Naive thymus-derived CD8-positive, alpha-beta T cell (primary cell): ENCODE measurements at regions of chr3 and their contacts with region 1.

Region 1: DNA sequence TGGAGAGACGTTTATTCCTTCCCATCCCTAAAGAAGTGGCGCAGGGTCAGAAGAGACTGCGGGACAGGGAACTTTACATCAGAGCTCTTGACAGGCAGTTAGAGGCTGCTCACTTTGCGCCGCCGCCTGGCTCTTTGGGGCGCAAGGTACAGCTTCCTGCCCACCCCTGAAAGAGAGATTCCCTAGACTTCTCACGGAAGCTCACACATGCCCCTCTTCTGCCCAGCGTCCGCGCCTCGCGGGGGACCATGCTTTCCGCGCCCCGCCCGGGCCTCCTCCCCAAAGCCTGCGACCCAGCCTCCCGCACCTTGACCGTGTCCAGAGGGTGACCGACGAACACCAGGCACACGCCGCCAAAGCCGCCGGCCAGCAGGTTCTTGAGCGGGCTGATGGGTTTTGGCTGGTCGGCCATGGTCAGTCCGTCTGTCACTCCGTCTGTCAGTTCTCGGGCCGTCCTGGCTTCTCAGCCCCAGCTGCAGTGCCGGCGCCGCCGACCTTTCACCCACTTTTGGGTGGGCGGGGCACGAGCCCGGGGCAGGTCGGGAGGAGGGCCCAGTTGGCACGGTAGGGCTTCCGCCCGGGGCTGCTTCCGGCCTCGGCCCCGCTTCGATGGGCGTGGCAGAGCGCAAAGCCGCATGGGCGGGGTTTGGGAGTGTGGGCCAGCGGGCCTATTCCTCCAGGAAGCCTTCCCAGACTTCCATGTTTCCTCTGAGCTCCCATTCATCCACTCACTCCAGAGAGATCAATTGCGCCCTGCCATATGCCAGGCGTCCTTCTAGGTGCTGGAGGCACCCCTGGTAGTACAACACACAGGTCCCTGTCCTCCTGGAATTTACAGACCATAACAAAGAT is at the start of gene SLC25A20:
- DNase-seq: peak; percentile 79 to 92 (median 86)
- ATAC-seq: peak; percentile 94
- H3K4me3 Mint-ChIP-seq: peak within 1 kb of the TSS; percentile 92 to 97 (median 95)
- H3K27ac Mint-ChIP-seq: peak within 1 kb of the TSS; percentile 83 to 97 (median 95)
- H3K4me1 Mint-ChIP-seq: peaks cover 16 to 59% (median 47%) of the 10 kb centered on the region in 4 donors
- H3K27me3 Mint-ChIP-seq: no peaks in the 10 kb centered on the region
- polyA plus RNA-seq, gene SLC25A20: 13.7 to 44.6 (median 19.4) TPM

Region 2: GRCh38 chr3:48716982-48717746 is 181.4 kb before region 1 on chr3 and contains the start of gene IP6K2:
- POLR2A ChIA-PET with region 1: interaction called, 11 read pairs
- DNase-seq: peak; percentile 94 to 99 (median 98)
- ATAC-seq: peak; percentile 99
- H3K4me3 Mint-ChIP-seq: peak within 1 kb of the TSS; percentile 88 to 99 (median 96)
- H3K27ac Mint-ChIP-seq: peak within 1 kb of the TSS; percentile 87 to 98 (median 97)
- H3K4me1 Mint-ChIP-seq: peaks cover 15 to 47% (median 43%) of the 10 kb centered on the region in 4 donors
- H3K27me3 Mint-ChIP-seq: peaks cover 0 to 2% (median 0%) of the 10 kb centered on the region in 5 donors
- polyA plus RNA-seq, gene IP6K2: 46.4 to 58.8 (median 51.4) TPM

Region 3: GRCh38 chr3:48811524-48811923 is 87.1 kb before region 1 on chr3:
- POLR2A ChIA-PET with region 1: interaction called, 10 read pairs
- DNase-seq: no peak
- ATAC-seq: no peak
- H3K4me3 Mint-ChIP-seq: peak overlapping the region in 7 of 10 donors; percentile 27 to 61 (median 40)
- H3K27ac Mint-ChIP-seq: peak overlapping the region; percentile 73 to 95 (median 92)
- H3K4me1 Mint-ChIP-seq: peaks cover 9 to 43% (median 30%) of the 10 kb centered on the region in 4 donors
- H3K27me3 Mint-ChIP-seq: no peaks in the 10 kb centered on the region

Region 4: DNA sequence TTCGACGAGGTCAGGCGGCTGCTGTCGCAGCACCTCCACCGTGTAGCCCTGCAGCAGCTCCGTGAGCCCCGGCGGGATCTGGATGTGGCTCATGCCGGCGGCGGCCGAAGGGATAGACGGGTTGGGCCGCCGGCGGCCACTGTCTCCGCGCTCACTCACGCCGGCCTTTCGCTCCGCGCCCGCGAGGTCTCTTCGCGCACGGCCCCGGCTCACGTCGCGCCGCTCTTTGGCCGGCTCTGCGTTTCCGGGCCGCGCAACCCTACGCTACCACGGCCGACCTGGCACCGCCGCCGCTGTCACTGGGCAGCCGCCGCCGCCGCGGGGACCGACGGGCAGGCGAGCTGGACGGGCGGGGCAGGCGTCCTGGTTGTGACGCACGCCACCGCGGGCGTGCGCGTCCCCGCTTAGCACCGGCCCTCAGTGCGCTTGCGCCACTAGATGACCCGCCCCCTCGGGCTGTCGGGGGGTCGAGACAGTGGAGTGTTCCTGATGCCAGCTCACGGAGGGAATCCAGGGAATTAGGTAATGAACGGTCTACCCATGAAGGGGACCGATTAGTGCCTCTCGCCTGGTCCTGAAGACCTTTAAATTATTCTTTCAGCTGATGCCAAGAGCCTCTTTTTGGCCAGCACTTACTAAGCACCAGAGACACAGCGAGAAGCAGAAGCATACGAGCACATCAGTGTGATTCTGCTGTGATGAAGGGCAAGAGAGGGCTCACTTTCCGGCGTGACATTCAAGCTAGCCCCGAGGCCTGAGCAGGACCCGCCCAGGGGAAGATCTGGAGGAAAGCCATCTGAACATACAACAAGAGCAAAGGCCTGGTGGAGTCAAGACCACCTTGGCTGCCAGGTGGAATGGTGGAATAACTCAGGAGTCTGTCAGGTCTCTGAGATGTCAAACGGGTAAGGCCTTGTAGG is 50.8 kb before region 1 on chr3 and contains the start of gene PRKAR2A:
- POLR2A ChIA-PET with region 1: interaction called, 15 read pairs
- DNase-seq: peak; percentile 65 to 88 (median 78)
- ATAC-seq: peak; percentile 73 to 83
- H3K4me3 Mint-ChIP-seq: peak within 1 kb of the TSS; percentile 81 to 94 (median 91)
- H3K27ac Mint-ChIP-seq: peak within 1 kb of the TSS; percentile 93 to 99 (median 97)
- H3K4me1 Mint-ChIP-seq: peaks cover 10 to 34% (median 25%) of the 10 kb centered on the region in 4 donors
- H3K27me3 Mint-ChIP-seq: no peaks in the 10 kb centered on the region
- polyA plus RNA-seq, gene PRKAR2A: 10.3 to 14.0 (median 11.0) TPM

Region 5: DNA sequence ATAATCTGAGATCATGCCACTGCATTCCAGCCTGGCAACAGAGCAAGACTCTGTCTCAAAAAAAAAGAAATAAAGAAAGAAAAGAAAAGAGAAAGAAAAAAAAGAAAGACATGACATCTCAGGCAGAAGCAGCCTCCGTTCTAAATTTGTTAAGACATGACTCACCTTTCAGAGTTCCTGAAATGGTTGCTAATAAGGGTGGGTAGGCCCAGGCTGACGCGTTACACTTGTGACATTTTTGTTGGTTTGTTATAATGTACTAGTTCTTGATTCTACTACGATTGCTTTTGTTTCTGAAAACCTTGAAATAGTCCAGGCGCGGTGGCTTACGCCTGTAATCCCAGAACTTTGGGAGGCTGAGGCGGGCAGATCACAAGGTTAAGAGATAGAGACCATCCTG is 20.9 kb before region 1 on chr3:
- POLR2A ChIA-PET with region 1: no interaction called
- DNase-seq: no peak
- ATAC-seq: no peak
- H3K4me3 Mint-ChIP-seq: no peak overlapping the region
- H3K27ac Mint-ChIP-seq: peak overlapping the region in 3 of 10 donors; percentile 31 to 65 (median 57)
- H3K4me1 Mint-ChIP-seq: peaks cover 0 to 8% (median 3%) of the 10 kb centered on the region in 4 donors
- H3K27me3 Mint-ChIP-seq: no peaks in the 10 kb centered on the region

Region 6: DNA sequence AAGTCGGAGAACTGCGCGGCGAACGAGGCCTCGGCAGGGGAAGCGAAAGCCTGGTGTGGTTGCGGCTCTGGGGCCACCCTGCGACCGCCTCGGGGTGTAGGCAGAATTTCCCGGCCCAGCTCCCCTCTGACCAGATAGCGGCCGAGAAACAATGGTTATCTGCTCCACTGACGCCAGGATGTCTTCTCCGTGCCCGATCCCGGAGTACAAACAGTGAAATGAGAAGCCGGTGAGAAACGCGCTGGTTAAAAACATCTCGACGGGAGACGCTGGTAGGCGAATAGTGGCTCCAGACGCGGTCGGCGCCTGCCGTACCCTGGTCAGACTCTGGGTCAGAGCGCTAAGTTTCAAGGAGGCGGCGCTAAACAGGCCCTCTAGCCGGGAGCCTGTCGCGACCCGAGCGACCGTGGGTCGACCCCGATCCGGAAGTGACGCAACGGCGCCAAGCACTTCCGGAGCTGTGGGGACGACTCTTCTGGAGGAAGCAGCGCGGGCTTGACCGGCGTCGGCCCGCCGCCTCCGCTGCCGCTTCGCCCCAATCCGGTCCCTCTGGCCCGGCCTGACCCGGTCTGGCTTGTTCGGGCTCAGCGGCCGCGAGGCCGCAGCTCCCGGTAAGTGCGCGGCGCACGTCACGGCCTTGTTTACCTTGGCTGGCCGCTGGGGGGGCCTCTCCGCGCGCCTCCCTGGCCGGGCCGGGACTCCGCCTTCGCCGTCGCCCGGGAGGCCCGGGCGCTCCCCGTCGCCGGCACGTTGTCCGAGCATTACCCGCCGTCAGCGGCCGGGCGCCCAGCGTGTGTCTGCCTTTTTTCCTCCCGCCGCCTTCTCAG is 20.0 kb after region 1 on chr3 and contains the start of gene ARIH2:
- POLR2A ChIA-PET with region 1: interaction called, 50 read pairs
- DNase-seq: peak; percentile 82 to 93 (median 87)
- ATAC-seq: peak; percentile 81 to 83
- H3K4me3 Mint-ChIP-seq: peak within 1 kb of the TSS; percentile 93 to 99 (median 96)
- H3K27ac Mint-ChIP-seq: peak within 1 kb of the TSS; percentile 96 to 100 (median 99)
- H3K4me1 Mint-ChIP-seq: peaks cover 11 to 36% (median 26%) of the 10 kb centered on the region in 4 donors
- H3K27me3 Mint-ChIP-seq: no peaks in the 10 kb centered on the region
- polyA plus RNA-seq, gene ARIH2: 92.7 to 119 (median 101) TPM